CD4-positive, alpha-beta memory T cell (primary cell): ENCODE measurements at regions of chr19 and their contacts with region 1.

Region 1: DNA sequence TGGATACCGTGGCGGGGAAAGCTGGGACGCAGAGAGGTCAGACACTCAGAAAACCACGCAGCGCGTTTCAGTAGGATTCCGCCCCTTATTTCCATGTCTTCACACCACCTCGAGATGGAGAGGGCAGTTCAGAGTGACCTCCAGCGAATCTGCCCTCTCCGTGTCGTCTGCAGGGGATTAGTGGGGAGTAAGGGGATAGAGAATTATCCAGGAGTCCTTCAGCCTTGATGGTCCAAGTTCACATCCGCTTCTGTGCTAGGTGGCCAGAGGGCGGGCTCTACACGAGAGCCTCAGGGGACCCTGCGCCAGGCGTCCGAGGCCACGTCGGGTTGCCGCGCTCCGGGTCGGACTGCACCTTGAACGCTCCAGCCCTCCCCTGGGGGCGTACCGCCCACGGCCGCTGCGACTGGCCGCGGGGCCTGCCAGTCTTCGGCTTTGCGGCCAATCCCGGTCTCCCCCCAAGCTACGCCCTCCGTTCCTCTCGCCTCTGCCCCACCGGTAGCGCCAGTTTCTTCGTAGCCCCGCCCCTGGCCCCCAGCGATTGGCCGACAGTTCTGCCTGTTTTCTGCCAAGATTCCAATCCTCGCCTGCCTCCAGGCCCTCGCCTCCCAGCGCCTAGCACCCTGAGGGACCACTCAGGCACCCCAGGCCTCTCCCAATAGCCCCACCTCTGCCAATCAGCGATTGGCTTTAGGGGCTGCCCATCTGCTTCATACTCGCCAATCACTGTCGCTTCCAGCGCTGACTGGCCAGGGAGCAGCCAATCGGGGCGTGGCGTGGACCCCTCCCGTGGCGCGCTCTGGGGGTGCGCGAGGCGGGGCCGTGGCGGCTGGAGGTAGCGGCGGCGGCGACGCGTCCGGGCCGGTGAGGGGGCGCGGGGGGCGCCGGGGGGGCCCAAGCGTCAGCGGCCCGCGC is at the start of gene SLC25A42:
- DNase-seq: peak; percentile 99 to 100 (median 99)
- H3K4me3 ChIP-seq: peak within 1 kb of the TSS; percentile 83 to 85
- H3K4me3 Mint-ChIP-seq: peak within 1 kb of the TSS; percentile 84 to 95 (median 91)
- H3K27ac ChIP-seq: peak within 1 kb of the TSS; percentile 57
- H3K27ac Mint-ChIP-seq: peak within 1 kb of the TSS; percentile 82 to 93 (median 91)
- H3K4me1 ChIP-seq: peaks cover 38% of the 10 kb centered on the region
- H3K4me1 Mint-ChIP-seq: peaks cover 19 to 43% (median 28%) of the 10 kb centered on the region in 4 donors
- H3K27me3 ChIP-seq: no peaks in the 10 kb centered on the region
- H3K27me3 Mint-ChIP-seq: no peaks in the 10 kb centered on the region
- total RNA-seq, gene SLC25A42: 28.3 to 31.6 TPM

Region 2: GRCh38 chr19:19033426-19034203 is 29.8 kb before region 1 on chr19 and contains the starts of genes ARMC6 and SUGP2:
- CTCF ChIA-PET with region 1: no interaction called
- POLR2A ChIA-PET with region 1: interaction called, 3 read pairs
- intact Hi-C with region 1: loop called (anchors 1 kb)
- DNase-seq: peak; percentile 88 to 97 (median 94)
- H3K4me3 ChIP-seq: peak within 1 kb of the TSS; percentile 81
- H3K4me3 Mint-ChIP-seq: peak within 1 kb of the TSS; percentile 91 to 97 (median 93)
- H3K27ac ChIP-seq: peak within 1 kb of the TSS; percentile 82
- H3K27ac Mint-ChIP-seq: peak within 1 kb of the TSS; percentile 84 to 99 (median 94)
- H3K4me1 ChIP-seq: peaks cover 23% of the 10 kb centered on the region
- H3K4me1 Mint-ChIP-seq: peaks cover 16 to 43% (median 26%) of the 10 kb centered on the region in 4 donors
- H3K27me3 ChIP-seq: no peaks in the 10 kb centered on the region
- H3K27me3 Mint-ChIP-seq: no peaks in the 10 kb centered on the region
- total RNA-seq, gene ARMC6: 11.8 to 12.8 TPM
- total RNA-seq, gene SUGP2: 111 to 113 TPM

Region 3: DNA sequence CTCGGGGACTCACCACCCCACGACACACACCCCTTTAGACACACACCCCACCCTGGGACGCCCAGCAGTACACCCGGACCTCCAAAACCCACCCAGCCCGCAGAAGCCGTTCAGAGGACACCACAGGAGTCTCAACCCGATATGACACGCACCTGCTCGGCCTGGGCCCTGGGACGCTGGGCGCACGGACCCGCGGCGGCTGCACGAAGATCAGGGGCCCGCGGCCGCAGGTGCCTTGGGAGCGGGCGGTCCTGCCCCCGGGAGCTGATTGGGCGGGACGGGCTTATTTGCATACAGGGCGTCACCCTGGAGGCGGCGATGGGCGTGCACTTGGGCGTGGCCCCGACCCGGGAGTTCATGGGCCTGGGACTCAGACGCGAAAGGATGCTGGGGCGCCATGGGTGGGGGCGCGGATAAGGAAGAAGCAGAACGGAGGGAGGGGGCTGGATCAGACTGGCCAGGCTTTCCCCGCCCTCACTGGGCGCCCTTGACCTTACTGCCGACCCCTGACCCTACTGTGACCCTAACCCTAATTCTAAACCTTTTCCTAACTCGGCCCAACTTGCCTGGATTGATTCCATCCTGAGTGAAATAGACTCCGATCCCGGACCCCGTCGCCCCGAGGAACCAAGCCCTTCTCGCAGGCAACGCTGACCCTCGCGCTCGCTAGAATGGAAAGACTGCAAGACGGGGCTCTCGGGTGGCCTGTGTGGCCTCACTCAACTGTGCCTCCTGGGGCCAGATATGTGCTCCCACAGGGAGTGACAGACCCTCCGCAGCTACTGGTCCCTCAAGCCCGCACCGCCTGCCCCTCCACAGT is 106.8 kb after region 1 on chr19 and contains the start of gene MEF2B:
- CTCF ChIA-PET with region 1: no interaction called
- POLR2A ChIA-PET with region 1: no interaction called
- intact Hi-C with region 1: no loop called
- DNase-seq: peak; percentile 68 to 85 (median 73)
- H3K4me3 ChIP-seq: peak within 1 kb of the TSS in 1 of 2 donors; percentile 5
- H3K4me3 Mint-ChIP-seq: peak within 1 kb of the TSS in 7 of 8 donors; percentile 60 to 82 (median 71)
- H3K27ac ChIP-seq: no peak within 1 kb of the TSS
- H3K27ac Mint-ChIP-seq: peak within 1 kb of the TSS in 6 of 7 donors; percentile 25 to 79 (median 60)
- H3K4me1 ChIP-seq: peaks cover 14% of the 10 kb centered on the region
- H3K4me1 Mint-ChIP-seq: peaks cover 12 to 17% (median 14%) of the 10 kb centered on the region in 4 donors
- H3K27me3 ChIP-seq: no peaks in the 10 kb centered on the region
- H3K27me3 Mint-ChIP-seq: peaks cover 1% of the 10 kb centered on the region in 2 donors
- total RNA-seq, gene MEF2B: 3.1 to 5.2 TPM